ENCODE measurements at regions of chr13 and their contacts with region 1.

Region 1: DNA sequence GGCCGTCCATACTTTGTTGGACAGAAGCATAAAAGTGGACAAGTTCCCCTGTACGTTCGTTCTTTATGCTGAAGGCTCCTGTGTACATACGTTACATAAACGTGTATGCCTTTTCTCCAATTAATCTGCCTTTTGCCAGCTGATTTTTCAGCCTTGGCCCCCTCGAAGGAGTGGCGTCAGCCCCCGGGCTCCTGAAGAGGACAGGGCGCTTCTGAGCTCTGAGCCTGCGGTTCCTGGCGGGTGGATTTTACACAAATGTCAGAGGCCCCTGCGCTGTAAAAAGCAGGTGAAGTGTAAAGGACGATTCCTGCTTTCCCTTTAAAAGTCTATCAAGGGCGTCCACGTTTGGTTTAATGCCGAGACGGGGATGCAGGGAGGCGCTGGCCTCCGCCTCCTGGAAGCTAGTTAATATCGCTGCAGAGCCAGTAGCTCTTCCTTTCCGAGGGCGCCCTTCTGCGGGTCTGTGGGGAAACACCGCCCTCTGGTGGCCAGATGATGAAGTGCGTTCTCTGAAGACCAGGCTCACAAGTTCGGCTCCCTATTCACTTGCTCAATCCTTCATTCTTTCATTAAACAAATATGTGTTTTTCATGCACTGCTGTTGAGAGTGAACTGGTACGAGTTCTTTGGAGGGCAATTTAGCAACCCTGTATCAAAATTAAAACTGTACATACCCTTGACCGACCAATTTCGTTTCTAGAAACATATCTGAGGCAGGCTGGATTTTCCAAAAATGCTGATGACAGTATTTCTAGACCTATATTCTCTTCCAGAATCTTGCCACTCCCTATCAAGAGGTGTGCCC is 62.0 kb downstream of the GPR12 start:
- DNase-seq: peak; percentile 81 to 90
- H3K4me3 ChIP-seq: peak overlapping the region in 1 of 2 donors; percentile 19
- H3K27ac ChIP-seq: no peak overlapping the region
- H3K4me1 ChIP-seq: peaks cover 0 to 5% (median 0%) of the 10 kb centered on the region in 4 donors
- H3K27me3 ChIP-seq: no peaks in the 10 kb centered on the region
- CTCF ChIP-seq: peak; percentile 94 to 95

Region 2: GRCh38 chr13:26184791-26185250 is 513.8 kb before region 1 on chr13:
- intact Hi-C with region 1: loop called (anchors 2 kb)
- DNase-seq: peak; percentile 44 to 76
- H3K4me3 ChIP-seq: no peak overlapping the region
- H3K27ac ChIP-seq: no peak overlapping the region
- H3K4me1 ChIP-seq: peaks cover 0 to 10% (median 6%) of the 10 kb centered on the region in 4 donors
- H3K27me3 ChIP-seq: no peaks in the 10 kb centered on the region
- CTCF ChIP-seq: peak; percentile 79 to 93

Region 3: DNA sequence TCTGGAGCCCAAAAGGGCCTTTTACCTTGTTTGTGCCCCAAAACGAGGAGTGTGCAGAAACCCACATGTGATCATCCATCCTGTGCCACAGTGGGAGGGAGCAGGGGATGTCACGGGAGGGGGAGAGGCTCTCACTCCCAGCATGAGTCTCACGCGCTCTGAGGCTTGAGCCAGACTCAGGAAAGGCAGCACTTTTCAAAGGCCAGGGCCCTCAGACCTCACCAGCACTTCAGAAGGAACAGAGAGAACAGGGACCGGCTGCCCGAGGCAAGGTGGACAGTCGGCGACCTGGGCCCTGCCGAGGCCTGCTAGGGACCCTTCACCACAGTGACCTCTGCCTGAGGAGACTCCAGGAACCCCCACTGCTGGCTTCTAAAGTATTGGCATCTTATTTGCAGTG is 212.8 kb before region 1 on chr13:
- intact Hi-C with region 1: loop called (anchors 5 kb)
- DNase-seq: peak; percentile 72 to 79
- H3K4me3 ChIP-seq: no peak overlapping the region
- H3K27ac ChIP-seq: peak overlapping the region; percentile 9 to 43
- H3K4me1 ChIP-seq: no peaks in the 10 kb centered on the region
- H3K27me3 ChIP-seq: no peaks in the 10 kb centered on the region
- CTCF ChIP-seq: no peak

Region 4: GRCh38 chr13:26557393-26558023 is 141.1 kb before region 1 on chr13 and contains the start of gene WASF3:
- intact Hi-C with region 1: loop called (anchors 5 kb)
- DNase-seq: peak; percentile 90 to 96
- H3K4me3 ChIP-seq: peak within 1 kb of the TSS; percentile 60 to 86
- H3K27ac ChIP-seq: peak within 1 kb of the TSS; percentile 69 to 73
- H3K4me1 ChIP-seq: peaks cover 0 to 37% (median 22%) of the 10 kb centered on the region in 4 donors
- H3K27me3 ChIP-seq: no peaks in the 10 kb centered on the region
- CTCF ChIP-seq: no peak